Cardiac septum (tissue), 1 donor: ENCODE measurements at regions of chr19 and their contacts with region 1.

Region 1: GRCh38 chr19:38319421-38320258 is at the start of gene KCNK6:
- DNase-seq: peak; percentile 88
- total RNA-seq, gene KCNK6: 14.1 TPM

Region 2: GRCh38 chr19:38142176-38143035 is 177.2 kb before region 1 on chr19:
- intact Hi-C with region 1: loop called (anchors 10 kb)
- DNase-seq: no peak

Region 3: GRCh38 chr19:38173291-38174041 is 146.2 kb before region 1 on chr19:
- intact Hi-C with region 1: loop called (anchors 2 kb)
- DNase-seq: peak; percentile 94

Region 4: GRCh38 chr19:38245826-38246498 is 73.7 kb before region 1 on chr19:
- intact Hi-C with region 1: loop called (anchors 5 kb)
- DNase-seq: no peak

Region 5: GRCh38 chr19:38277969-38278680 is 41.5 kb before region 1 on chr19:
- intact Hi-C with region 1: loop called (anchors 2 kb)
- DNase-seq: peak; percentile 86

Region 6: DNA sequence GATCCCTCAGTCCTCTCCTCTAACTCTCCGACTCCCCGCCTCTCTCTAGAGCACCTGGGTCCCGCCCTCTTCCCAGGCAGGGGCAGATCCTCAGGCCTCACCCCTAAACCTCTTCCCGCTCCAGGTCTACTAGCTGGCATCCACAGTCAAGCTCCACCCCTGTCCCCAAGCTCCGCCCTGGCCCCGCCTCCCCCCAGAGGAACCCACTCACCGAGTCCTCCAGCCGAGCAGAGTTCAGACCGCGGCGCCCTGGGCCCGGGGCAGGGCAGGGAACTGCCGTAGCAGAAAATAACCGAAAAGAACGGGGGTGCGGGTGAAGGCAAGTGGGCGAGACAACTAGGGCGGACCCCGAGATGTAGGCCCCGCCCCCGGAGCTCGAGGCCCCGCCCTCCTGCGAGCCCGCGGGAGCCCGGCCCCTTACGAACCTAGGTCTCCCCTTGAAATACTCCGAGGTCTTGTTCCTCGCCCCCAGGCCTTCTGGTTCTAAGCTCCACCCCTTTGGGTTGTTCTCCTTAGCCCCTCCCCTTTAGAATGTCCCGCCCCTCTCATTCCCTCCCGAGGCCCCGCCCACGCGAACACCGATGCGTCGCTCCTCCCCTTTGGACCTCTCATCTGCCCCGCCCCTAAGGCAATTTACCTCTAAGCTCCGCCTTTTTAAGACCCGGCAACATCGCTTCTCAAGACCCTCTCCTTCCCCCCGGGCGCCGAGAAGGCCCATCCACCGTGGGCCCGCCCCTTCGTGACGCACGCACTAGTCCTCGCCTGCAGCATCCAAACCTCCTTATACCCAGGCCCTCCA is 68.1 kb after region 1 on chr19 and contains the start of gene GGN:
- intact Hi-C with region 1: no loop called
- DNase-seq: peak; percentile 84
- total RNA-seq, gene GGN: 0.40 TPM